Left cardiac atrium (tissue), 4 donors: ENCODE measurements at regions of chr1 and their contacts with region 1.

Region 1: GRCh38 chr1:29812408-29813135 is 576.2 kb downstream of the PTPRU start:
- DNase-seq: no peak
- ATAC-seq: peak; percentile 15 to 33

Region 2: DNA sequence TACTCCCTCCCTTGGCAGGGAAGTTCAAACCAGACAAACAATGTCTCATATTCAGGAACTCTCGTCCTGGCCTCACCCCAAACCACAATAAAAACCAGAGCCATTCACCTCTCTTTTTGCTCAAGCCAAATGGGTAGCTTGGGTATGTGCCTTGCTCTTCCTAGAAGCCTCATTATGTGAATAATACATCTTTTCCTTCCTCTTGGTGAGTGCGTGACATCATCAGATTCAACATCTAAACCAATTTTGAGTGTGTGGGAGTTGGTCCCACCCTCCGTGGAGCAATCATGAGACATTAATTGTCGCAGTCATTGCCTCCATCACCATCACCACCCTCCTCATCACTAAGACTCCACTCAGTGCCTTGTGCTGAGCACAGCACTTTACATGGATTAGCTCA is 93.3 kb before region 1 on chr1:
- intact Hi-C with region 1: no loop called
- DNase-seq: no peak
- ATAC-seq: no peak

Region 3: GRCh38 chr1:29901624-29902325 is 89.2 kb after region 1 on chr1:
- intact Hi-C with region 1: loop called in 1 of 2 experiments (anchors 10 kb)
- DNase-seq: no peak
- ATAC-seq: peak; percentile 21 to 69

Region 4: DNA sequence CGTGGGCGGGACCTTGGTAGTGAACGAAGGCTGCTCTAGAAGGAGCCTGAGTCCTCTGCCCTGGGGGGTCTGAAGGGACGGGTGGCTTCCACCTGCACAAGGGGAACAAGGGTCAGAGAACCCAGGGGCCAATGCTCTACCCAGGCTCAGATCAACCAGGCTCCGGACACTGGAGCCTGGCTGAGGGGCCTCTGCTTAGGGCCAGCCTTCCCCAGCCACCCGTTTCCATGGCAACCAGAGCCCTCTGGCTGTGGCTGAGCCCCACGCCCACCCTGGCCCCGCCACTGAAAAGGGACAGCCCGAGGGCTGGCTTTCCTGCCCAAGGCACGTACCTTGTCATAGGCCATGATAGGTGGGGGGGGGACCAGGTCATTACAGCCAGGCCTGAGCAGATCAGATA is 148.3 kb after region 1 on chr1:
- intact Hi-C with region 1: no loop called
- DNase-seq: no peak
- ATAC-seq: no peak